Left ventricle myocardium inferior (tissue), 1 donor: ENCODE measurements at regions of chr4 and their contacts with region 1.

Region 1: DNA sequence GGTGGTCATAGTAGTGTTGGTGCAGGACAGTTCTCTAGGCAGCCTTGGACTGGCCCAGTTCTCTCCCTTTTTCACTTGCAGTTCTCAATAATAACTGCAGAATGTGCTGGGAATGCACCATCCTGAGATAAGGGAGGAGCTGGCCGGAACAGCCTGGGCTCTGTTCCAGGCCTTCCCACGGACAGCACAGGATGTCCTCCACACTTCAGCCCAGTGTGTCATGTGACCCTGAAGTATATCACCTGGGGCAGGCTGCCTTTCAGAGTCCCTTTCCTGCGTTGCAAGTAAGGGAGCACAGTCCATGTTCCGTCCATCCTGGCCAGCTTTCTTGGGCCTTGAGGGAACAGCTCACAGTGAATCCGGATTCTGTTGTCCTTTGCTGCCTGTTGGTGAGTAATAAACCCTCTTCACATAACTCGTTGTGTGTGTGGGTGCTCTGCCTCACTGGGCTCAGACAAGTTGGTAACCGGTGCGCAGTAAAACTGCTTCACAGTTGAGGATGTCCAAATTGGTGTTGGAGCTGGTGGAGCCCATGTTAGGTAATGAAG is 32.3 kb upstream of the BBS12 start:
- DNase-seq: peak; percentile 77
- H3K4me3 ChIP-seq: peak overlapping the region; percentile 65
- H3K27ac ChIP-seq: peak overlapping the region; percentile 88
- H3K4me1 ChIP-seq: peaks cover 26% of the 10 kb centered on the region
- H3K27me3 ChIP-seq: no peaks in the 10 kb centered on the region
- CTCF ChIP-seq: no peak

Region 2: GRCh38 chr4:122152711-122153226 is 547.5 kb before region 1 on chr4:
- intact Hi-C with region 1: no loop called
- DNase-seq: peak; percentile 33
- H3K4me3 ChIP-seq: peak overlapping the region; percentile 93
- H3K27ac ChIP-seq: peak overlapping the region; percentile 93
- H3K4me1 ChIP-seq: peaks cover 34% of the 10 kb centered on the region
- H3K27me3 ChIP-seq: no peaks in the 10 kb centered on the region
- CTCF ChIP-seq: no peak

Region 3: GRCh38 chr4:122577808-122578781 is 122.2 kb before region 1 on chr4:
- intact Hi-C with region 1: no loop called
- DNase-seq: no peak
- H3K4me3 ChIP-seq: no peak overlapping the region
- H3K27ac ChIP-seq: no peak overlapping the region
- H3K4me1 ChIP-seq: no peaks in the 10 kb centered on the region
- H3K27me3 ChIP-seq: peaks cover 18% of the 10 kb centered on the region
- CTCF ChIP-seq: peak; percentile 74

Region 4: DNA sequence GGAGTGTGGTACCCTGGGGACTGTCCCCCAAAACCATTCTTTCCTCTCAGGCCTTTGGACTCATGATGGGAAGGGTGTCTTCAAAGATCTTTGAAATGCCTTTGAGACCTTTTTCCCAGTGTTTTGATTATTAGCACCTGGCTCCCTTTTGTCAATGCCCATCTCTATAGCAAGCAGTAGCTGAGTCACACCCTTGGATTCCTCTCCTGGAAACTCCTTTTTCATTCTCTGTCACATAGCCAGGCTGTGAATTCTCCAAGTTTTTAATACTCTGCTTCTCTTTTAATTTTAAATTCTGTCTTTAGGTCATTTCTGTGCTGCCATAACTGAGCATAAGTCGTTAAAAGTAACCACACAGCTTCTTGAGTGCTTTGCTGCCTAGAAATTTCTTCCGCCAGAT is 109.1 kb before region 1 on chr4:
- intact Hi-C with region 1: loop called (anchors 10 kb)
- DNase-seq: no peak
- H3K4me3 ChIP-seq: no peak overlapping the region
- H3K27ac ChIP-seq: no peak overlapping the region
- H3K4me1 ChIP-seq: no peaks in the 10 kb centered on the region
- H3K27me3 ChIP-seq: no peaks in the 10 kb centered on the region
- CTCF ChIP-seq: no peak

Region 5: GRCh38 chr4:122842984-122843531 is 142.8 kb after region 1 on chr4:
- intact Hi-C with region 1: no loop called
- DNase-seq: no peak
- H3K4me3 ChIP-seq: no peak overlapping the region
- H3K27ac ChIP-seq: no peak overlapping the region
- H3K4me1 ChIP-seq: peaks cover 29% of the 10 kb centered on the region
- H3K27me3 ChIP-seq: no peaks in the 10 kb centered on the region
- CTCF ChIP-seq: no peak